Activated CD4-positive, alpha-beta memory T cell treated with anti-CD3 and anti-CD28 coated beads for 36 hours (primary cell): ENCODE measurements at regions of chr12 and their contacts with region 1.

Region 1: DNA sequence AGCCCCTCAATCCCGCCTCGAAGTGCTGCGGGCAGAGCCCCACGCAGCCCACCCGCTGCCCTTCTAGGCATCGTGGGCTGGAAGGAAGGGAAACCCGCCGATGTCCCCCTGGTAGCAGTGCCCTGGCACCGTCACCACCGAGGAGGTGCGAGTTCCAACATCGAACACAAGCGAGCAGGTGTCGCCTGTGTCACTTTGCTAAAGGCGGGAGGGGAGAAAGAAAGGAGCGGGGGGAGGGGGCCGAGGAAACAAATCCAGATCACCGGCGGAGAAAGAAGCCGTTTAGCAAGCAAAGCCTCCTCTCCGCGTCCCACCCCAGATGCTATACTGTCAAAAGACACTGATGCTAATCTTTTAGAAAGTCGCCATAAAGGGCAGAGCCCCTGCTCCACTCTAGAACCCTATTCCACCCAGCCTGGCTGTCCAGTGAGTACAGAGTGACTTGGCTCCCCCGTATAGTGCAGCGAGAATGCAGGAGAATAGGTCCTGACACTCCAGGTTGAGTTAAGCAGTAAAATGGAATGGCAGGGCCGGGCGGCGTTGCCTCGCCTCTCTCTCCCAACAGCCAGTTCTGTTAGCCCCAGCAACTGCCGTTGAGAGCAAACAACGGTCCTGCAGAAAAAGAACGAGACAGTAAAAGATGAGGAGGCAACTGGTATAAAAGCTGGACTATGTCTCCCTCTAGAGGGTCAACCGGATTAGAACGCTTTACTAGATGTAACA is 67.9 kb upstream of the USP15 start:
- DNase-seq: peak; percentile 48
- H3K4me3 Mint-ChIP-seq: peak overlapping the region; percentile 62
- H3K27ac Mint-ChIP-seq: no peak overlapping the region
- H3K4me1 Mint-ChIP-seq: peaks cover 19% of the 10 kb centered on the region
- H3K27me3 Mint-ChIP-seq: peaks cover 34% of the 10 kb centered on the region

Region 2: GRCh38 chr12:62006076-62006732 is 186.1 kb before region 1 on chr12:
- CTCF ChIA-PET with region 1: interaction called, 3 read pairs
- POLR2A ChIA-PET with region 1: no interaction called
- intact Hi-C with region 1: loop called (anchors 2 kb)
- DNase-seq: peak; percentile 10
- H3K4me3 Mint-ChIP-seq: no peak overlapping the region
- H3K27ac Mint-ChIP-seq: no peak overlapping the region
- H3K4me1 Mint-ChIP-seq: no peaks in the 10 kb centered on the region
- H3K27me3 Mint-ChIP-seq: peaks cover 1% of the 10 kb centered on the region

Region 3: GRCh38 chr12:62123721-62124203 is 68.6 kb before region 1 on chr12:
- CTCF ChIA-PET with region 1: interaction called, 5 read pairs
- POLR2A ChIA-PET with region 1: no interaction called
- intact Hi-C with region 1: loop called (anchors 1 kb)
- DNase-seq: peak; percentile 40
- H3K4me3 Mint-ChIP-seq: no peak overlapping the region
- H3K27ac Mint-ChIP-seq: no peak overlapping the region
- H3K4me1 Mint-ChIP-seq: no peaks in the 10 kb centered on the region
- H3K27me3 Mint-ChIP-seq: peaks cover 3% of the 10 kb centered on the region

Region 4: DNA sequence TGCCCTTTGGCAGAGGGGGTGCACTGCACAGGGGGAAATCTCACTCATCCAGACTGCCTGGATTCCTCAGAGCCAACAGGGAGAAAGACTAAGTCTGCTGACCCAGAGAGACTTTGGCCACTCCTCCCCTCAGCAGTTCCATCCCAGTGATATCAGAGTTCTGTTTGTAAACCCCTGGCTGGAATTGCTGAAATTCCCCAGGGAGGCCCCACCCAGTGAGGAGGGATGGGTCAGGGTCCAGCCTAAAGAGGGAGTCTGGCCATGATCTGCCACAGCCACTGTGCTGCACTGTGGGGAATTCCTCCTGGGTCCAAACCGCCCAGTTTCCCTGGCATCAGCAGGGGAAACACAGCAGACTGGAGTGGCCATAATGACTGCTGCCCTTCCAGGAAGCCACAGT is 13.0 kb after region 1 on chr12:
- CTCF ChIA-PET with region 1: interaction called, 11 read pairs
- POLR2A ChIA-PET with region 1: no interaction called
- intact Hi-C with region 1: no loop called
- DNase-seq: no peak
- H3K4me3 Mint-ChIP-seq: no peak overlapping the region
- H3K27ac Mint-ChIP-seq: no peak overlapping the region
- H3K4me1 Mint-ChIP-seq: peaks cover 1% of the 10 kb centered on the region
- H3K27me3 Mint-ChIP-seq: peaks cover 6% of the 10 kb centered on the region

Region 5: DNA sequence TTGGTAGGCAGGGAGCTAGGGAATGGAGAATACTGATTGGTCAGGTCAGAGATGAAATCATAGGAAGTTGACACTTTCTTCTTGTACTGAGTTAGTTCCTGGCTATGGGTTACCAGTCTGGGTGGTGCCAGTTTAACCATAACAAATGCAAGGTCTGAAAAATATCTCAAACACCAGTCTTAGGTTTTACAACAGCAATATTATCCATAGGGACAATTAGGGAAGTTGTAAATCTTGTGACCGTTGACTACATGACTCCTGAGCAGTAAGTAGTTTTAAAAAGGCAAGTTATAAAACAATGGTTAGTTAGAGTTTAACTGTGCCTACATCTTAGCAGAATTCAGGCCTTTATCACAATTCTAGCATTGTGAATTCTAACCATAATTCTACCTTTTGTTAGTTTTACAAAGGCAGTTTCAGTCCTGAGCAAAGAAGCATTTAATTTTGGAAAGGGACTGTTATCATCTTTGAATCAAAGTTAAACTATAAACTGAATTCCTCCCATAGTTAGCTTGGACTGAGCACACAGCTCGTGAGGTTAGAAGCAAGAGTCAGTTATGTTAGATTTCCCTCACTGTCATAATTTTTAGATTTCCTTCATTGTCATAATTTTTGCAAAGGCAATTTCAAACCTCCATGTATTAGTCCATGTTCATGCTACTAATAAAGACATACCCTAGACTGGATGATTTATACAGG is 254.6 kb after region 1 on chr12:
- CTCF ChIA-PET with region 1: no interaction called
- POLR2A ChIA-PET with region 1: no interaction called
- intact Hi-C with region 1: no loop called
- DNase-seq: no peak
- H3K4me3 Mint-ChIP-seq: no peak overlapping the region
- H3K27ac Mint-ChIP-seq: no peak overlapping the region
- H3K4me1 Mint-ChIP-seq: no peaks in the 10 kb centered on the region
- H3K27me3 Mint-ChIP-seq: peaks cover 1% of the 10 kb centered on the region